ENCODE measurements at regions of chr3 and their contacts with region 1.

Region 1: GRCh38 chr3:44729384-44729910 is at the start of gene ZNF501:
- DNase-seq: peak; percentile 96 to 97
- ATAC-seq: peak; percentile 99 to 100 (median 100)
- H3K4me3 ChIP-seq: peak within 1 kb of the TSS; percentile 77
- H3K27ac ChIP-seq: peak within 1 kb of the TSS; percentile 61
- H3K4me1 ChIP-seq: no peaks in the 10 kb centered on the region
- H3K27me3 ChIP-seq: no peaks in the 10 kb centered on the region
- CTCF ChIP-seq: no peak
- total RNA-seq, gene ZNF501: 1.6 to 3.4 (median 2.6) TPM

Region 2: GRCh38 chr3:44612678-44613077 is 116.8 kb before region 1 on chr3:
- intact Hi-C with region 1: no loop called
- DNase-seq: no peak
- ATAC-seq: no peak
- H3K4me3 ChIP-seq: no peak overlapping the region
- H3K27ac ChIP-seq: no peak overlapping the region
- H3K4me1 ChIP-seq: no peaks in the 10 kb centered on the region
- H3K27me3 ChIP-seq: no peaks in the 10 kb centered on the region
- CTCF ChIP-seq: no peak

Region 3: GRCh38 chr3:44648564-44649229 is 80.8 kb before region 1 on chr3 and contains the start of gene ZNF35:
- intact Hi-C with region 1: no loop called
- DNase-seq: peak; percentile 78 to 88
- ATAC-seq: peak; percentile 69 to 99 (median 94)
- H3K4me3 ChIP-seq: peak within 1 kb of the TSS; percentile 95
- H3K27ac ChIP-seq: peak within 1 kb of the TSS; percentile 68
- H3K4me1 ChIP-seq: peaks cover 8% of the 10 kb centered on the region
- H3K27me3 ChIP-seq: no peaks in the 10 kb centered on the region
- CTCF ChIP-seq: no peak
- total RNA-seq, gene ZNF35: 3.6 to 7.9 (median 5.3) TPM

Region 4: DNA sequence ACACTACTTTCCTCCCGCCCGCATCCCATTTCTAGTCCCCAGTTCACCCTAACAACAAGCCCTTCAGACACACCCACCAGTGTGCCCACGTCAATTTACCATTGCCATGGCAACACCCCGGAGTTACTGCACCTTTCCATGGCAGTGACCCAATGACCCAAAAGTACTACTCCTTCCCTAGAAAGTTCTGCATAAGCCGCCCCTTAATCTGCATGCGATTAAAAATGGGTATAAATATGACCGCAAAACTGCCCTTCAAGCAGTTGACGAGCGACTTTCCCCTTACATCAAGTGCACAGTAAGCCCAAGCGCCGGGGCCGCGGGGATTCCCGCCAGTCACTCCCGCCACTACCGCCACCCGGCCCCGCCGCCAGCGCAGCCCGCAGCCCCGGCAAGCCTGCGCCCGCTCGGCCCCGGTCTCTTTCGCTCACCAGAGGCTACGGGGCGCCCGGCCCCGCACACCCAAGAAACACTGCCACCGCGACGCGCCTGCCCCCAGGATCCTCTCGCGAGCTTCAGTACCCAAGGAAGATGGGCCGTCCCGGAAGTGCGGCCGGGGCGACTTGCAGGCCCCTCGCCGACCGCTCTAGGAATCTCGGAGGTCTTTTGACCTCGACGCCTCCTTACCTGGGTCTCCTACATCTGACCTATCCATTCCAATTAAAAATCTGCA is 44.2 kb before region 1 on chr3:
- intact Hi-C with region 1: no loop called
- DNase-seq: peak; percentile 75 to 82
- ATAC-seq: peak; percentile 37 to 93 (median 82)
- H3K4me3 ChIP-seq: peak overlapping the region; percentile 74
- H3K27ac ChIP-seq: peak overlapping the region; percentile 30
- H3K4me1 ChIP-seq: no peaks in the 10 kb centered on the region
- H3K27me3 ChIP-seq: peaks cover 0 to 10% (median 2%) of the 10 kb centered on the region in 3 donors
- CTCF ChIP-seq: no peak

Region 5: DNA sequence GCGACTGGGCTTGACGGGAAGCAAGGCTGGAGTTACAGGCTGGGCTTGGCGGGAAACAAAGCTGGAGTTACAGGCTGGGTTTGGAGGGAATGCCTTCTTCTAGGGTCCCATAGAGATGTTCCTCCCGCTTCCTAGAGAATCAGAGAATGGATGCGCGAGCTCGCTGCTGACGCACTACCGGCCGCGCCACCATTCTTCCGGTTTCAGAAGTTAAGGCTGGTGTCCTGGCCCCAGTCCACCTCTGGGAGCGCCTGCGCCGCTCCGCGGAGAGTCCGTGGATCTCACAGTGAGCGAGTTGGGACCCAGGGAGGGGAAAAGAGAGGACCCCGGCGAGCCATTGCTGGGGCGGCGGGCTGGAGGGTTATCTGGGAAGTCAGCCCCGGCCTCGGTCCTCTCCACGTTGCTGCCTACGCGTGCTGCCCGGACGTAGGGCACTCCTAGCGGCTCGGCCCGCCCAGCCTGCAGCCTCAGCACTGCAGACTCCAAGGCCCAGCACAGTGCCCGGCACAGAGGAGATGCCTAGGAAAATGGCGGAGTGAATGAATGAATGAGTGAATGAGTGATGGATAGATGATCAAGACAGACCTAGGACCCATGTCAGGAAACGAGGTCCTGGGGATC is 16.9 kb before region 1 on chr3 and contains the start of gene ZNF502:
- intact Hi-C with region 1: loop called (anchors 2 kb)
- DNase-seq: peak; percentile 91 to 94
- ATAC-seq: peak; percentile 92 to 100 (median 98)
- H3K4me3 ChIP-seq: peak within 1 kb of the TSS; percentile 92
- H3K27ac ChIP-seq: peak within 1 kb of the TSS; percentile 80
- H3K4me1 ChIP-seq: no peaks in the 10 kb centered on the region
- H3K27me3 ChIP-seq: peaks cover 0 to 6% (median 0%) of the 10 kb centered on the region in 3 donors
- CTCF ChIP-seq: peak; percentile 36
- total RNA-seq, gene ZNF502: 3.2 to 4.0 (median 3.7) TPM